ENCODE measurements at regions of chr19 and their contacts with region 1.

Region 1: DNA sequence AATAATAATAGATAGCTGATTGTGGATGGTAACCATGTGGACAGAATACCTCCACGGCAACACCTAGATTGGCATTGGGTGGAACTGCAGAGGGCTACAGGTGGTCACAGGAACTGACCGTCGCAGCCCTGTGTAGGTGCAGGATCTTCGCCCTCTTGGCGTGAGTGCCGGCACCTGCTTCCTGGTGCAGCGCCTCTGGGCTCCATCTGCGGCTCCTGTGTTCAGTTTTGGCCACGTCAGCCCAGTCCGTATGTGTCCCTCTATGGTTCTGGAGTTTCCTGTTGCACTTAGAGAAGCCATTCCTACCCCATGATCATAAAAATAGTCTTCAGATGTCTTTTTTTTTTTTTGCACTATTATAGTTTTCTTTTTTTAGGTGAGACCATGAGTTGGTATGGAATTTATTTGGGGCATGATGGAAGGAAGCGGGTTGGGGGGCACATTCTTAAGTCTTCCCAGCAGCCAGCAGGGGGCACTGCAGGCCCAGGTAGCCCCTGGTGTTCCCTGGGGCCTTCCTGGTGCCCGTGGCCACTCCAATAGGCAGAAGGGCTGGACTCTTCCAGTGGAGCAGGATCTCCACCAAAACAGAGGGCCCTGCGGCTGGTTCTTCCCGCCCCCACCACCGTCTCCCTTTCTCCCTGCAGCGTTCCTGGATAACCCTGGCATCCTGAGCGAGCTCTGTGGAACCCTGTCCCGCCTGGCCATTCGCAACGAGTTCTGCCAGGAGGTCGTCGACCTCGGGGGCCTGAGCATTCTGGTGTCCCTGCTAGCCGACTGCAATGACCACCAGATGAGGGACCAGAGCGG is 10.1 kb upstream of the SLC25A42 start:
- DNase-seq: peak; percentile 76
- H3K4me3 ChIP-seq: no peak overlapping the region
- H3K27ac ChIP-seq: no peak overlapping the region
- H3K4me1 ChIP-seq: no peaks in the 10 kb centered on the region
- H3K27me3 ChIP-seq: no peaks in the 10 kb centered on the region
- CTCF ChIP-seq: peak; percentile 84

Region 2: GRCh38 chr19:18961767-18962620 is 91.7 kb before region 1 on chr19:
- intact Hi-C with region 1: no loop called
- DNase-seq: no peak
- H3K4me3 ChIP-seq: no peak overlapping the region
- H3K27ac ChIP-seq: no peak overlapping the region
- H3K4me1 ChIP-seq: no peaks in the 10 kb centered on the region
- H3K27me3 ChIP-seq: peaks cover 40% of the 10 kb centered on the region
- CTCF ChIP-seq: no peak

Region 3: DNA sequence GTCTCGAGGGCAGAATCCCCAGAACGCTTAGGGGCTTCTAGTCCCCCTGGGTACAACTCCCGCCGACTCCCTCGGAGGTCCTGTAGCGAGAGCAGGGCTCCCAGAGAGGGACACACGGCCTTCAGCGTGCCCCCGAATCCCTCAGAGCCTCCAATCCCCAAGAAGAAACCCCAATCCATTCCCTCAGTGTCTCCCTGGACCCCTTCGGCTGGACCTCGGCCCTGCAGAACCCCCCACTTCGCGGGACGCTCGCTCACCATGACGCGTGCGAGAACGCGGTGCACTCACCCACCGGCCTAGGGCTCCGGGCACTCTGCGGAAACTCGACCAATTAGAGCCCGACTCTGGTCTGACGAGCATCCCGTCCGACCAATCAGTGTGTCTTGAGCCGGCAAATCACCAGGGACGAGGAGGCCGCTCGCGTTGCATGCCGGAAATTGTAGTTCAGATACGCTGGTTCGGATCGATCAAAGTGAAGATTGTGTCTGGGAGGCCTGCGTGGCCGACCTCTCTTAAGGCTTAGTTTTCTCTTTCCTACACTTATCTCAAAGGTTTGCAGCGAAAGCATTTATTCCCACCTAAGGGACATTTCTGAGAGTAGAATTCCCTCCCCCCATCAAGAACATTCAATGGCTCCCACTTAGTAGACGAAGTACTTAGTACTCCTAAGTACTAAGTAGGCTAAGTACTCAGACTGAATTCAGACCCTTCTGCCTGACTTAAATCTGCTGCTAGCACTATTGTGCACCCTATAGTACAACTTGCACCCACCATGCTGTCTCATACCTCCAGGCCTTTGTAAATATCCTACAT is 84.7 kb after region 1 on chr19 and contains the start of gene TMEM161A:
- intact Hi-C with region 1: loop called (anchors 5 kb)
- DNase-seq: peak; percentile 99
- H3K4me3 ChIP-seq: peak within 1 kb of the TSS; percentile 71
- H3K27ac ChIP-seq: peak within 1 kb of the TSS; percentile 85
- H3K4me1 ChIP-seq: peaks cover 29% of the 10 kb centered on the region
- H3K27me3 ChIP-seq: no peaks in the 10 kb centered on the region
- CTCF ChIP-seq: no peak
- total RNA-seq, gene TMEM161A: 22.9 TPM

Region 4: GRCh38 chr19:19342756-19343322 is 289.1 kb after region 1 on chr19:
- intact Hi-C with region 1: no loop called
- DNase-seq: peak; percentile 64
- H3K4me3 ChIP-seq: no peak overlapping the region
- H3K27ac ChIP-seq: peak overlapping the region; percentile 31
- H3K4me1 ChIP-seq: peaks cover 7% of the 10 kb centered on the region
- H3K27me3 ChIP-seq: no peaks in the 10 kb centered on the region
- CTCF ChIP-seq: peak; percentile 83